Breast epithelium (tissue), 4 donors: ENCODE measurements at regions of chr17 and their contacts with region 1.

Region 1: GRCh38 chr17:29116804-29117772 is 63.1 kb downstream of the MYO18A start:
- DNase-seq: peak; percentile 39 to 69
- H3K4me3 ChIP-seq: no peak overlapping the region
- H3K27ac ChIP-seq: no peak overlapping the region
- H3K4me1 ChIP-seq: peaks cover 5 to 11% of the 10 kb centered on the region in 2 donors
- H3K27me3 ChIP-seq: no peaks in the 10 kb centered on the region
- CTCF ChIP-seq: peak; percentile 66 to 78 (median 71)
- POLR2A ChIP-seq: no peak

Region 2: GRCh38 chr17:28953444-28954118 is 163.5 kb before region 1 on chr17:
- intact Hi-C with region 1: no loop called
- DNase-seq: no peak
- H3K4me3 ChIP-seq: no peak overlapping the region
- H3K27ac ChIP-seq: peak overlapping the region in 1 of 2 donors; percentile 98
- H3K4me1 ChIP-seq: no peaks in the 10 kb centered on the region
- H3K27me3 ChIP-seq: no peaks in the 10 kb centered on the region
- CTCF ChIP-seq: peak; percentile 73 to 79 (median 76)
- POLR2A ChIP-seq: no peak

Region 3: DNA sequence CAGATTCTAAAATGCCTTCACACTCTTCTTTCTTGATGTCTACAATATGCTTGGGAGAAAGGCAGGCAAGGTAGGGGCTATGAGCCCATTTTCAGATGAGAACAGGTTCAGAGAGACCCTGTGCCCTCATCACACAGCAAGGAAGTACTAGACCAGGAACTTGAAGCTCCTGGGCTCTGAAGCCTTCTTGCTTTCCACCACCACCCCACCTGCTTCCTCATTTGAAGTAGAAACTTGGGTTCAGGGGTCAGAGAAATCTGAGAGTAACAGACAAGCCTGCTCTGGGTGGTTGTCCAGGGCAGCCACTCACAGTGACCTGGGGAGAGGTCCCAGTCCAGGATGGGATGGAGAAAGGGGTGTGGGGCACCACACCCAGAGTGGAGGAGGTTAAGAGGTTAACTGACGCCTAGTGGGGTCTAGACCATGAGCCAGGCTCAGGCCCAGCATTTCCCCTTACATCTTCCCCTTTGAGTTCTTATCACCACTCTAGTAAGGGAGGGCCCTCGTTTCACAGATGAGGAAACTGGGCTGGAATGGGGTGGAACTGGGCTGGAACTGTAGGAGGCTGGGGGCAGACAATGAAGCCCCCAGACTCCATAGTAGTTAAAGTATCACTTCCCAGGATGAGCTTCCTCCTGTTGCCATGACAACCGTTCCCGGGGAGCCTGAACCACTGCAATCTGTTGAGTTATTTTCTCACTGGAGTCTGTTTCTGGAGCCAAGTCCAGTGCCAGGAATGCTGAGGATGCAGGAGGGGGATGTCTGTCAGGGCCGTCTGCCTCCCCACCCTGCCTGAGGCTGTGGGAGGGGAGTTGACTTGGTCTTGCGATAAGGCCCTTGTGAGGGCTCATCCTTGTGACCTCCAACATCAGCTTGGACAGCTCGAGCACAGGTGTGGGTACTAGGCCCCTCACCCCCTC is 149.6 kb before region 1 on chr17:
- intact Hi-C with region 1: loop called (anchors 5 kb)
- DNase-seq: no peak
- H3K4me3 ChIP-seq: no peak overlapping the region
- H3K27ac ChIP-seq: no peak overlapping the region
- H3K4me1 ChIP-seq: no peaks in the 10 kb centered on the region
- H3K27me3 ChIP-seq: peaks cover 0 to 13% of the 10 kb centered on the region in 2 donors
- CTCF ChIP-seq: no peak
- POLR2A ChIP-seq: no peak

Region 4: GRCh38 chr17:29078183-29079045 is 38.7 kb before region 1 on chr17:
- intact Hi-C with region 1: loop called (anchors 2 kb)
- DNase-seq: no peak
- H3K4me3 ChIP-seq: no peak overlapping the region
- H3K27ac ChIP-seq: no peak overlapping the region
- H3K4me1 ChIP-seq: no peaks in the 10 kb centered on the region
- H3K27me3 ChIP-seq: no peaks in the 10 kb centered on the region
- CTCF ChIP-seq: no peak
- POLR2A ChIP-seq: no peak

Region 5: DNA sequence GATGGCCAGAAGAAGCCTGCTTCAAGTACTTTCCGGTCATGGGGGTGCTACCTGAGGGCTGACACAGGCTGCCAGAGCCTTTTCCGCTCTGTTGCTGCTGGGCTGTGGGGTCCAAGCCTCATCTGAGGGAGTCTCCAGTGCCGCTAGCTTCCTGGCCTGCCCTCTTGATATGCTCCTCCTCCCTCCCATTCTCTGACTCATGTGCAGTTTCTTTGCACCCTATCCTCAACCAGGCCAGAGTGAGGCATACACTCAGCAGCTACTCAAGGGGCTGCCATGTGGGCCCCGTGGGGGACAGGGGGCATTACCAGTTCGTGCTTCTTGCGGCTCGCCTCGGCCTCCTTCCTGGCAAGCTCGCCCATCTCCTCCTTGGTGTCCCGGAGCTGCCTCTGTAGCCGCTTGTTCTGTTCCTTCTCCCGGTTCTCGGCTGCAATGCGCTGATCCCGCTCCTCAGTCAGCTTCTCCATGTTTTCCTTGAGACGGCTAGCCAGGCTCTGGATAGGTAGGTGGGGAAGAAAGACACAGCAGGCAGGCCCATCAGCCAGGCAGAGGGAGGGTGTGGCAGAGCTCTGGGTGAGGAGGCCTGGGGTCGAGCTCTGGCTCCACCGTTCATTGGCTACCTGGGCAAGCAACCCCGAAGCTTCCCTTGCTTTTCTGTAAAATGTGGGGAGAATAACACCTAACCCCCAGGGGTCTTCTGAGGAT is 30.3 kb before region 1 on chr17:
- intact Hi-C with region 1: loop called (anchors 1 kb)
- DNase-seq: no peak
- H3K4me3 ChIP-seq: no peak overlapping the region
- H3K27ac ChIP-seq: no peak overlapping the region
- H3K4me1 ChIP-seq: no peaks in the 10 kb centered on the region
- H3K27me3 ChIP-seq: no peaks in the 10 kb centered on the region
- CTCF ChIP-seq: no peak
- POLR2A ChIP-seq: no peak

Region 6: DNA sequence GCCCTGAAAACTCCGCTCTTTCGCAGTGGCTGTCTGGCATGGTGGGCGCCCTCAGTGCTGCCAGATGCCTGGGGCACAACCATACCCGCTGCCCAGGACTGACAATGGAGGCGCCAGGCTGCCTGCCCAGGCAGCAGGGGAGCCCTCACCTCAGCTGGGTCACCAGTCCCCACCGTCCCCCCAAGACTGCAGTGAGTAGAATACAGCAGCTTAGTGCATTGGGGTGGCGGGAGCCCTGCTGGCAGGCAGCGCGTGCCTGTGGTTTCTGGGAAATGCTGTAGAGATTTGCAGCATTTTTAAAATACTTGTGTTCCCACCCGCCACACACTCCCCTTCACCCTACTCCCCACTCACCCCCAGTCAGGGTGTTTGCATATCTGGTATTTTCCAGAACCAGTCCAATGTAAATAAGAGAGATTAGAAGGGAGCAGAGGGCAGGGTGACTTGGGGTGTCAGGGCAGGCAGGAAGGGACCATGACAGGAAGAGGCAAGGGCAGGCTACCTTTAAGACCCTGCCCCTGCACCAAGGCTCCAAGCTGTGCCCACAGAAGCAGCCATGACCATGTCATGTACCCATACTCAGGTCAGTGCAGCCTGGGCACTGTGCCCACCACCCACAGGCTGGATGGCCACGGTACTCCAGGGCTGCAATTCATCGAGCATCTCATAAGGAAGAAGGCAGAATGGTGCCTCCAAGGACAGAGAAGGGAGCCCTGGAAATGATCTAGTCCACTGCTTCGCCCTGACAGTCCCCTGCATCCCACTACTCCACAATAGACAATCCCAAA is 41.6 kb after region 1 on chr17:
- intact Hi-C with region 1: no loop called
- DNase-seq: no peak
- H3K4me3 ChIP-seq: peak overlapping the region in 1 of 3 donors; percentile 27
- H3K27ac ChIP-seq: peak overlapping the region; percentile 30 to 67
- H3K4me1 ChIP-seq: peaks cover 27 to 44% of the 10 kb centered on the region in 2 donors
- H3K27me3 ChIP-seq: no peaks in the 10 kb centered on the region
- CTCF ChIP-seq: no peak
- POLR2A ChIP-seq: no peak

Region 7: DNA sequence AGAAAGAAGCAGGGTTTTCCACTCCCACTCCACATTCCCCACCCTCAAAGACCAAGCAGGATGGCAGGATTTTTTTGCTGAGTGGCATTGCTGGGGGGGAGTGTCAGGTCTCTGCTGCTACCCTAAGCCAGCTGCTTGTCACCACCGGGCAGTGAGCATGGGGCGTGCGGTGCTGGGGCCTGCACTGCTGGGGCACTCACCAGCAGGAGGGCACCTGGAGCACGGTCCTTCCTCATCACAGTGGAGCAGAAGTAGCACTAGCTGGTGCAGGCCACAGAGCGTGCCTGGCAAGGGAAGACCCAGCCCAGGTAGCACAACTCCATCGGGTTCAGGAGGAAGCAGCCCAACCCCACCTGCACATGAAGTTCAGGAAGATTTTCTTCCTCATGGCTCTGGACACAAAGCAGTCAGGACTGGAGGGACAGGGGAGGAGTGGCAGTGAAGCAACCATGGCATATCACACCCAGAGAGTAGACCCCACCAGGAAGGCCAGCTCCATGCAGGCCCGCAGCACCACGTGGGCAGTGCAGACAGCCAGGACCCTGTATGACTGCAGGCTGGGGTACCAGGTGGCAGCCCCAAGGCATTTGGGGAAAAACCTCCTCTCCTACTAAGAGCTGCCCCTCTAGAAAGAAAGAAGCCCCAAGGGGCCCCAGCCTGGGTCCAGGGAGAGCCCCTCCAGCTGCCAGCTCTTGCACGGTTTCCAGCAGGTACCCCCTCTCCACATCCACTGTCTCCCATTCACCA is 79.9 kb after region 1 on chr17:
- intact Hi-C with region 1: no loop called
- DNase-seq: no peak
- H3K4me3 ChIP-seq: no peak overlapping the region
- H3K27ac ChIP-seq: no peak overlapping the region
- H3K4me1 ChIP-seq: no peaks in the 10 kb centered on the region
- H3K27me3 ChIP-seq: no peaks in the 10 kb centered on the region
- CTCF ChIP-seq: no peak
- POLR2A ChIP-seq: no peak